A549 (cell line): ENCODE measurements at regions of chr6 and their contacts with region 1.

Region 1: GRCh38 chr6:157045831-157046454 is 268.8 kb downstream of the ARID1B start:
- DNase-seq: peak; percentile 31 to 57
- ATAC-seq: peak; percentile 68 to 83; a peak in 5 of 6 replicates
- H3K4me3 ChIP-seq: no peak overlapping the region
- H3K27ac ChIP-seq: no peak overlapping the region
- H3K4me1 ChIP-seq: no peaks in the 10 kb centered on the region
- CTCF ChIP-seq: peak; percentile 50
- EP300 ChIP-seq: no peak
- POLR2A ChIP-seq: no peak
- RAD21 ChIP-seq: peak; percentile 29 to 35; a peak in 3 of 5 replicates

Region 2: DNA sequence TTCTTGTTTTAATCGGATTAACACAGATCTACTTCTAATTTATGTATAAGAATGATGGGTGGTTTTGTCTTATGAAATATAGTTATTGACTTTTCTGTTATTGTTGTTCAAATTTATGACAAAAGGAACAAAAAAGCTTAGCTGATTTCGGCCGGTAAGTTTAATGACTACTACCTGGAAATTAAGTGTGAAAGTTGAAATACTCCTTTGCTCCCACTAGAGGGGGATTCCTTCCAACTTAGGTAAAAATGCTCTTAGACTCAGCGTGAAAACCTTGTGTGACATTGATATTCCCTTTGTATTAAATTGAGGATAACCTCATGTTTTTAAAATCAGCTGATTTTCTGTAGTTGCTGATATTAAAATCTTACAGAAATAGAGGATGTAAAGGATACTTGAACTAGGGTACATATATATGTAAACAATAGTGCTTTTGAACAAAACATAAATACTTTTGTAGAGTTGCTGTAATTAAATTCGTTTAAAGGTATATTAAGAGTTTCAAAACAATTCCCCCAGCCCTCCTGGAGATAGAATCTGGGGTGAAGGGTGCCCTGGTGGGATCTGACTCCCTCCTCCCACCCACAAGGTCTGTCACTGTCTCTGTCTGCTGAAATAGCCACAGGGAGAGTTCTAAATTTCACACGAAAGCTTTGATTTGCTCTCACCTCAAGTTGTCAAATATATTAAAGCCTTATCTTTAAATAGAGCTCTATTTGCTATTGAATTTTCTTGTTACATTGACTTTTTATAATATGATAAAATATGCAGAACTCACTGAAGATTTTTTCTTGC is 11.3 kb before region 1 on chr6:
- CTCF ChIA-PET with region 1: interaction called, 19 read pairs
- POLR2A ChIA-PET with region 1: no interaction called
- DNase-seq: peak; percentile 43 to 55
- ATAC-seq: peak; percentile 62 to 81; a peak in 4 of 6 replicates
- H3K4me3 ChIP-seq: no peak overlapping the region
- H3K27ac ChIP-seq: no peak overlapping the region
- H3K4me1 ChIP-seq: peaks cover 15% of the 10 kb centered on the region; the same call in 2 of the 3 replicates
- CTCF ChIP-seq: peak; percentile 55
- EP300 ChIP-seq: no peak
- POLR2A ChIP-seq: no peak
- RAD21 ChIP-seq: peak; percentile 49 to 57; a peak in 4 of 5 replicates

Region 3: DNA sequence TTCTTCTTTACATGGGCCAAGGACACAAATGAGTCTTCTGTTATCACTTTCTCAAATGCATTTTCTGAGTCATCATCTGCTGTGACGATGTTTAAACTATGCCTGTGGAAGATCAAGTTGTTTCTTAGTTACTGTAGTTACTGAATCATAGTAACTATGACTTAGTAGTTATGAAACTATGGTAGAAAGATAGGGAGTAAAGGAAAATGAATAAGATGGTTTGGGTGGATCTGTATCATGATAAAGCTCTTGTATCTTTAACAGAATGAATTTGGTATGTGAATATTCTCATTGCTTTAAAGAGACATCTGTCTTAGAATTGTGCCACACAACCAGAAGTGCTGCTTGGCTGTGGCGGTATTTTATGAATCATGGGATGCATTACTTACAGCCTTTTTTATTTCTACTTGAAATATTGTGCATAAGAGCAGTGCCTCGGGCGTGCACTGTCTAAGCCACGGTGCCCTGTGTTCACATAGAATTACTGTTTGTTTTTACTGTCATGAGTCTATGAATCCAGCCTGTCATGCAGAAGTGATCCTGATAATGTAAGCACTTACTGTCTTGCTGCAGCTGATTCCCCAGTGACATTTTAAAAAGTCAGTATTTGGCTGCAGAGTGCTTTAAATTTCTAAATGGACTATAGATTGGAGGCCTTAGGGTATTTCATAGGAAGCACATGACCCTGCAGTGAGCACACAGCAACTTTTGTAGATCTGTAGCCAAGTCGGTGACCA is 62.1 kb after region 1 on chr6:
- CTCF ChIA-PET with region 1: no interaction called
- POLR2A ChIA-PET with region 1: no interaction called
- DNase-seq: peak; percentile 46 to 75
- ATAC-seq: peak; percentile 82 to 89
- H3K4me3 ChIP-seq: peak overlapping the region; percentile 12; the same call in 1 of the 3 replicates
- H3K27ac ChIP-seq: peak overlapping the region; percentile 52 to 77; a peak in 5 of 6 replicates
- H3K4me1 ChIP-seq: peaks cover 43% of the 10 kb centered on the region
- CTCF ChIP-seq: no peak
- EP300 ChIP-seq: no peak
- POLR2A ChIP-seq: no peak
- RAD21 ChIP-seq: no peak

Region 4: DNA sequence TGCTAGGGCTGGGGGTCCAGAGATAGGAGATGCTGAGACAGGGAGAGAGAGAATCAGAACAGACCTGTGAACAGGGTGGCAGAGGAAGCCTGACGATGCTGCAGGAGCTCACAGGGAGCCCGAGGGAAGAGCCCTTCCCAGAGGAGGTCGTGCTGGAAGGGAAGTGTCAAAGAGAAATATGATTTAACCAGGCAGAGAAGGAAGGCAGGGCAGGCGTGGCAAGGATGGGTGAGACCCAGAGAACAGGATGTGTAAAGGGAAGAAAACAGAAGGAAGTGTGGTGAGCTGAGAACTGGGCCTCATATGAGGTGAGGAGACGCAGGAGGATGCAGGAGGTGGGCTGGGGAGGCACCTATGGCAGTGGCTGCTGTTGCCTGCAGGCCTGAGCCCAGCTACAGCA is 440.6 kb after region 1 on chr6:
- CTCF ChIA-PET with region 1: no interaction called
- POLR2A ChIA-PET with region 1: no interaction called
- DNase-seq: no peak
- ATAC-seq: no peak
- H3K4me3 ChIP-seq: no peak overlapping the region
- H3K27ac ChIP-seq: no peak overlapping the region
- H3K4me1 ChIP-seq: no peaks in the 10 kb centered on the region
- CTCF ChIP-seq: no peak
- EP300 ChIP-seq: no peak
- POLR2A ChIP-seq: no peak
- RAD21 ChIP-seq: no peak